K562 (cell line): ENCODE measurements at regions of chr11 and their contacts with region 1.

Region 1: DNA sequence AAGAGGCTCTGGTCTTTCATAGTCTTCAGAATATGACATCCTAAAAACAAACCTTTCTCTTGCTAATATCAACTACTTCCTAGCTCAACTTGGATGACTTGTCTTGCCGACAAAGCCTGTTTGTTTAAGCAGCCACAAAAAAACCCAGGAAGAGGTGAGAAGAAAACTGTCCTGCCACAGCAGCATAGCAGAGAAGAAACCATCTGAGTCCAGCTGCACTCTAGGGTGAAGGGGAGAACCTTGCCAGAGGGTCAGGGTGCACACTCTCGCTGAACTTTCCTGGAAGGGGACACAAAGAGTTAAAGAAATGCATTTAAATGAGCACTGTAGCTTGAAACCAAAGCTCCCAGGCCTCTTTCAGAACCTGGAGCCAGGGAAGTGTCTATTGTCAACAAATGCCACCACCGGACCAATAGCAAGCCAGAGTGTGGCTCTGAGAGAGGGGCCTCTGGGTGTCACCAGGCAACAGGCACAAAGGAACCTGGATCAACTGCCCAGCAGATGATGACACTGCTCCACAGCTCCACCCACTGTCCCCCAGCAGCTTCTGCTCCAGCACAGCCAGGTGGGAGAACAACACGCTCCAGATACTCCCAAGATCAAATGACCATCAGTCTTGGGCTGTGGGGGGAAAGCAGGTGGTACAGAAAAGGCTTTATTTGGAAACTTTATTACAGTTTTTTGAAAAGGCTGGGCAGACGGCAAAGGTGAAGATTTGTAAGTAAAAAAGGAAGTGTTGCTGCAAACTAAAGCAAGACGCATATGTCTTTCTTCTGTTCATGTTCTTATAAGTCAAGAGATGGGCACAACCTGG is 105.7 kb downstream of the RASSF10 start:
- DNase-seq: peak; percentile 67 to 86 (median 78)
- ATAC-seq: peak; percentile 99
- H3K4me3 ChIP-seq: no peak overlapping the region
- H3K27ac ChIP-seq: no peak overlapping the region
- H3K4me1 ChIP-seq: peaks cover 11 to 17% of the 10 kb centered on the region in 2 experiments
- H3K27me3 ChIP-seq: peaks cover 0 to 6% of the 10 kb centered on the region in 2 experiments; a peak in 1 of 5 replicates
- CTCF ChIP-seq: peak; percentile 74 to 82 (median 76)
- EP300 ChIP-seq: no peak
- POLR2A ChIP-seq: no peak
- RAD21 ChIP-seq: peak; percentile 83 to 91

Region 2: GRCh38 chr11:12989428-12990161 is 125.2 kb before region 1 on chr11:
- CTCF ChIA-PET with region 1: no interaction called
- POLR2A ChIA-PET with region 1: no interaction called
- in situ Hi-C with region 1: loop called (anchors 10 kb)
- intact Hi-C with region 1: no loop called
- DNase-seq: peak; percentile 75 to 97 (median 80)
- ATAC-seq: peak; percentile 90
- H3K4me3 ChIP-seq: peak overlapping the region; percentile 51
- H3K27ac ChIP-seq: peak overlapping the region; percentile 65
- H3K4me1 ChIP-seq: peaks cover 9 to 40% of the 10 kb centered on the region in 2 experiments; a peak in 3 of 5 replicates
- H3K27me3 ChIP-seq: no peaks in the 10 kb centered on the region
- CTCF ChIP-seq: no peak
- EP300 ChIP-seq: peak; percentile 91
- POLR2A ChIP-seq: peak; percentile 99
- RAD21 ChIP-seq: no peak